Naive thymus-derived CD4-positive, alpha-beta T cell (primary cell): ENCODE measurements at regions of chr14 and their contacts with region 1.

Region 1: DNA sequence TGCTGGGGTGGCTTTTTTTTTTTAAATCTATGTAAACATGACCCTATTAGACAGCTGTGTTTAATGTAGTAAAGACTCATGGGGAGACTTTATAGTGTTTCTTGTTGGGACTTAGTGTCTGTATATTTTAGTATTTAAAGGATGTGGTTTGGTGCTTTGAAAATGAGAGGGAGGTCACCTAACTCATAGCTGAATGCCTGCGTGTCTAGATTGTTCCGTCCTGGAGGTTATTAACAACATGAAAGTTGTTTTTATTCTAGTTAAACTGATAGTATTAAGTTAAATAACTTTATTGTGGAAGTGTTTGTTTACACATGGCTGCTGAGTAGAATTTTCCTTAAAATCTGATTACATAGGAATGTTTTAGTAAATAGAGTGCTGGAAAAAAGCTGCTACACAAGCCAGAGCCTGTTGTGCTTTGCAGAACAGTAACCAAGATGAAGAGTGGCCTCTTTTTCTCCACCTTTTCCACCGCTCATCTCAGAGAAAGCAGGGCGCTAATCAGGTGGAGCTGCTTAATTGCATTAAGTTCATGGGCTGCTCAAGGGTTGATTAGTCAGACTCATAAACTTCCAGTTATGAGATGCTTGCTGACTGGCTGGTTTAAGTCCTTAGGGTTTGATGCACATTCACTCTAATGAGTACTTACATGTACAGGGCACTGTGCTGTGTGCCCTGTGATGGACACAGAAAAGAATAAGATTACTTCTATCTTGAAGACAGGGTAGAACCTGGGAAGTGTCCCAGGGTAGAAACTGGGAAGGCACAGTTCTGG is 62.7 kb downstream of the FBXO34 start:
- DNase-seq: no peak
- ATAC-seq: peak; percentile 13
- H3K4me3 ChIP-seq: peak overlapping the region; percentile 19
- H3K4me3 Mint-ChIP-seq: peak overlapping the region; percentile 10 to 89 (median 84)
- H3K27ac ChIP-seq: peak overlapping the region; percentile 69
- H3K27ac Mint-ChIP-seq: peak overlapping the region; percentile 77 to 92 (median 85)
- H3K4me1 ChIP-seq: peaks cover 46 to 55% of the 10 kb centered on the region in 2 donors
- H3K4me1 Mint-ChIP-seq: peaks cover 49 to 94% (median 81%) of the 10 kb centered on the region in 7 donors
- H3K27me3 ChIP-seq: no peaks in the 10 kb centered on the region
- H3K27me3 Mint-ChIP-seq: no peaks in the 10 kb centered on the region

Region 2: DNA sequence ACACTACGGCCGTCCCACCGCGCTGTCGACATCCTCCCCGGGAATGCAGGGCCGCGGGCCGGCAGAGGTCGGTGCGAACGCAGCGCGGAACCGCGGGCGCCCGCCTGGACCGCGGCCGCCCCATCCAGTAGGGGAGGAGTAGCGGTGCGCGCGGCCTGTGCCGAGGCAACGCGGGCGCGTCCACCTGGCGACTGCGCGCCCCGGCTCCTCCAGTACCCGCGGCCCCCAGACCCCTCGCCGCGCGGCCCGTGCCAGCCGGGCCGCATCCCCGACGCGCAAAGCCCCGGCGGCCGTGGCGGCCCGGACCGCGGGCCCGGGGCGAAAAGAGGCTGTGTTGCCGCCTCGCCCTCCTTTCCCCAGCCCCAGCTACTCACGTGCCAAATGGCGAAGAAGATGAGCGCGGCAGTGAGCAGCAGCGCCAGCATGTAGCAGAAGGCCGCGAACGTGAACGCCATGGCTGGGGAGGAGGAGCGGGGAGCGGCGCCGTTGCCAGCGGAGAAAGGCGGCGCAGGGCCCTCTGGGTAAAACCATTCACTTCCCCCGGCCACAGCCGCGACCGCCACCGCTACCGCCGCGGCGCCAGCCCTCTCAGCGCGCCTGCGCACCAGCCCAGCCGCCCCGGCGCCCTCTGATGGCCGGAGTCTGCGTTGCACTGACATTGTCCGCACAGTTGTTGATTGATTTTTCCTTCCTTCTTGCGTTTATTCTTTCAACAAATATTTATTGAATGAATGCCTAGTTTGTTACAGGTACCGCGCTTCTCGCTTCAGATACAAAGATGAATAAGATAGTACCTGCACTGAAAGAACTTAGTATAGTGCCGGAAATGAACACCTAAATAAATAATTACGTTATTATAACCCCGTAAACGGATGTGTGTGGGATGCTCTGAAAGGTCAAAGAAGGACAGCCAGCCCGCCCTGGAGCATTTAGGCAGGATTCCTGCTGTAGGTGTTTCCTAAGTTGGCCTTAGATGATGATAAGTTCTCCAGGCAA is 892.7 kb before region 1 on chr14 and contains the start of gene CNIH1:
- CTCF ChIA-PET with region 1: no interaction called
- POLR2A ChIA-PET with region 1: no interaction called
- intact Hi-C with region 1: no loop called
- DNase-seq: peak; percentile 85 to 99 (median 93)
- ATAC-seq: peak; percentile 97
- H3K4me3 ChIP-seq: peak within 1 kb of the TSS; percentile 73
- H3K4me3 Mint-ChIP-seq: peak within 1 kb of the TSS; percentile 85 to 97 (median 94)
- H3K27ac ChIP-seq: peak within 1 kb of the TSS; percentile 80
- H3K27ac Mint-ChIP-seq: peak within 1 kb of the TSS; percentile 87 to 98 (median 95)
- H3K4me1 ChIP-seq: peaks cover 9 to 23% of the 10 kb centered on the region in 2 donors
- H3K4me1 Mint-ChIP-seq: peaks cover 23 to 54% (median 49%) of the 10 kb centered on the region in 7 donors
- H3K27me3 ChIP-seq: no peaks in the 10 kb centered on the region
- H3K27me3 Mint-ChIP-seq: peaks cover 0 to 2% (median 0%) of the 10 kb centered on the region in 5 donors
- total RNA-seq, gene CNIH1: 50.5 to 87.9 (median 57.8) TPM

Region 3: DNA sequence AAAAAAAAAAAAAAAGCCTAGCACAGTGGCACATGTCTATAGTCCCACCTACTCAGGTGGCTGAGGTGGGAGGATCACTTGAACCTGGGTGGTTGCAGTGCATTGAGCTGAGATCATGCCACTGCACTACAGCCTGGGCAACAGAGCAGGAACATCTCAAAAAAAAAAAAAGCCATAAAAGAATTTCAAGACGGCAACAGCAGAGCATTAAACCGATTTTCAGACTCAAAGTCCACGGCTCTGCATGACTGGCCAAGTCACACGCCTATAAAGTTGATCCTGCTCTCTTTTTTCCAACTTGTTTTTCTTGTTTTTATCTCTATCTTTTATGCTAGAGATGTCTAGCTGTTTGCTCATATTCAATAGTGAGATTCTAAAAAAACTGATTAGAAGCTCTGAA is 17.3 kb before region 1 on chr14:
- CTCF ChIA-PET with region 1: no interaction called
- POLR2A ChIA-PET with region 1: interaction called, 4 read pairs
- intact Hi-C with region 1: loop called in 1 of 2 experiments (anchors 2 kb)
- DNase-seq: no peak
- ATAC-seq: no peak
- H3K4me3 ChIP-seq: no peak overlapping the region
- H3K4me3 Mint-ChIP-seq: no peak overlapping the region
- H3K27ac ChIP-seq: no peak overlapping the region
- H3K27ac Mint-ChIP-seq: peak overlapping the region in 1 of 9 donors; percentile 12
- H3K4me1 ChIP-seq: no peaks in the 10 kb centered on the region
- H3K4me1 Mint-ChIP-seq: peaks cover 0 to 19% (median 6%) of the 10 kb centered on the region in 7 donors
- H3K27me3 ChIP-seq: no peaks in the 10 kb centered on the region
- H3K27me3 Mint-ChIP-seq: no peaks in the 10 kb centered on the region

Region 4: DNA sequence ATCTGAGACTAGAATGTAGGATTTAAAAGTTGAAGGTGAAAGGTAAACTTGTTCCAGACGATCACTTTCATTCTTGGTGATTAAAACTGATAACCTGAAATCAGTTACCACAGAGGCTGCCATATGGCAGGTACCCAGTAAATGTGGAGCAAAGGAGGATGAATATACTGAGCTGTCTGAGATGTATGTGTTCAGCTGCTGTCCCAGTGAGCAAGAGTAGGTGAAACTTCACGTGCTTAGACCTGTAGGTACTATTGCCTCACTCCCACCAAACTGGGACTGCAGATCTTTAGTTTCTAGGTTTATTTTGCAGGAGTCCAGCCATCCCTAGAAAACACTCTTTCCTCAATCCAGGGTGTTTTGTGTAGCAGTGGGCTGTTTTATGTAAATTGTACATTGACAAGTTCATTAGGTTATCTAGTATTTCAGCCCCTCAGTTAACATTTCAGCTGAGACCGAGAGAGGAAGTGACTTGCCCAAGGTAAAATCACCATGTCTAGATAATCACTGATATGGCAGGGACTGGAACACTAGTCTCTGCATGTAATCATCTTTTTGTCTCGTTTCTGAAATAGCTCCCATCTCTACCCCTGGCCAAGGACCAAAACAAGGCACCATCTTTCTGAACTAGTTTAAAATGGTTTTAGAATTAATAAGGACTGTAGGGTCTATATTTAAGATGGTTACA is 15.0 kb after region 1 on chr14:
- CTCF ChIA-PET with region 1: interaction called, 27 read pairs
- POLR2A ChIA-PET with region 1: interaction called, 10 read pairs
- intact Hi-C with region 1: loop called (anchors 1 kb)
- DNase-seq: no peak
- ATAC-seq: no peak
- H3K4me3 ChIP-seq: no peak overlapping the region
- H3K4me3 Mint-ChIP-seq: peak overlapping the region in 4 of 10 donors; percentile 6 to 32 (median 18)
- H3K27ac ChIP-seq: no peak overlapping the region
- H3K27ac Mint-ChIP-seq: peak overlapping the region in 5 of 9 donors; percentile 12 to 72 (median 63)
- H3K4me1 ChIP-seq: peaks cover 5 to 7% of the 10 kb centered on the region in 2 donors
- H3K4me1 Mint-ChIP-seq: peaks cover 26 to 59% (median 53%) of the 10 kb centered on the region in 7 donors
- H3K27me3 ChIP-seq: no peaks in the 10 kb centered on the region
- H3K27me3 Mint-ChIP-seq: no peaks in the 10 kb centered on the region

Region 5: GRCh38 chr14:55373784-55374705 is 40.1 kb after region 1 on chr14:
- CTCF ChIA-PET with region 1: no interaction called
- POLR2A ChIA-PET with region 1: no interaction called
- intact Hi-C with region 1: loop called in 1 of 2 experiments (anchors 1 kb)
- DNase-seq: peak in 8 of 9 donors; percentile 18 to 76 (median 58)
- ATAC-seq: peak; percentile 93
- H3K4me3 ChIP-seq: no peak overlapping the region
- H3K4me3 Mint-ChIP-seq: peak overlapping the region in 9 of 10 donors; percentile 22 to 82 (median 54)
- H3K27ac ChIP-seq: peak overlapping the region; percentile 64
- H3K27ac Mint-ChIP-seq: peak overlapping the region; percentile 75 to 94 (median 83)
- H3K4me1 ChIP-seq: peaks cover 12 to 20% of the 10 kb centered on the region in 2 donors
- H3K4me1 Mint-ChIP-seq: peaks cover 13 to 44% (median 30%) of the 10 kb centered on the region in 7 donors
- H3K27me3 ChIP-seq: no peaks in the 10 kb centered on the region
- H3K27me3 Mint-ChIP-seq: no peaks in the 10 kb centered on the region

Region 6: DNA sequence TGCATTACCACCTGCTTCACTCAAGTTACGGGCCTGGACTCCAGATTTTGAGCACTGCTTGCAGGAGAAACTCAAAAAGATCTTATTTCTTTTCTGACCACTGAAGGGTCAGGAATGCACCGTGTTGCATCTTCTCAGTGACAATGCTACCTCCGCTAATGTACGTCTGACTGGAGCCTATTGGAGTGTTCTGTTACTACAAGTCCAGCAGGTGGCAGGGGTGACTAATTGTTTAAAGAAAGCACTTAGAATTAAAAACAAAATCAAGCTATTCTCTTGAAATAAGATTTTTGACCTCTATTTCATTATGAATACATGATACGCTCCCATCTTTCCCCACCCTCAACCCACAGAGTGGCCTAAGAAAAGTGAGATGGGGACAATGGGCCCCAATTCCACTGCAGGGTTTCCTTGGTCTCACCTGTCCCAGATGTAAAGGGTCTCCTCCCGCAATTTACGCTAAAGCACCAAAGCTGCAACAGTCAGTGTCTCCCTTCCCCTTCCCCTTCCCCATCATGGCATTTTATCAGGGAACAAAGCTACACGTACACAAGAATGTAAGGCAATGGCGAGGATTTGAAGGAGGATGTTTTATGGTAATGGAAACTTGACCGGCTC is 104.3 kb after region 1 on chr14:
- CTCF ChIA-PET with region 1: no interaction called
- POLR2A ChIA-PET with region 1: no interaction called
- intact Hi-C with region 1: no loop called
- DNase-seq: peak in 4 of 9 donors; percentile 15 to 29 (median 16)
- ATAC-seq: no peak
- H3K4me3 ChIP-seq: no peak overlapping the region
- H3K4me3 Mint-ChIP-seq: no peak overlapping the region
- H3K27ac ChIP-seq: no peak overlapping the region
- H3K27ac Mint-ChIP-seq: peak overlapping the region in 2 of 9 donors; percentile 36 to 84
- H3K4me1 ChIP-seq: peaks cover 15 to 23% of the 10 kb centered on the region in 2 donors
- H3K4me1 Mint-ChIP-seq: peaks cover 11 to 28% (median 25%) of the 10 kb centered on the region in 7 donors
- H3K27me3 ChIP-seq: no peaks in the 10 kb centered on the region
- H3K27me3 Mint-ChIP-seq: peaks cover 0 to 10% (median 0%) of the 10 kb centered on the region in 5 donors

Region 7: GRCh38 chr14:56949828-56950227 is 1615.9 kb after region 1 on chr14:
- CTCF ChIA-PET with region 1: no interaction called
- POLR2A ChIA-PET with region 1: no interaction called
- intact Hi-C with region 1: no loop called
- DNase-seq: no peak
- ATAC-seq: no peak
- H3K4me3 ChIP-seq: no peak overlapping the region
- H3K4me3 Mint-ChIP-seq: no peak overlapping the region
- H3K27ac ChIP-seq: no peak overlapping the region
- H3K27ac Mint-ChIP-seq: no peak overlapping the region
- H3K4me1 ChIP-seq: no peaks in the 10 kb centered on the region
- H3K4me1 Mint-ChIP-seq: no peaks in the 10 kb centered on the region
- H3K27me3 ChIP-seq: peaks cover 0 to 4% of the 10 kb centered on the region in 2 donors
- H3K27me3 Mint-ChIP-seq: peaks cover 0 to 34% (median 27%) of the 10 kb centered on the region in 5 donors